ENCODE measurements at regions of chr9 and their contacts with region 1.

Region 1: GRCh38 chr9:114487607-114488300 is 17.5 kb downstream of the WHRN start:
- DNase-seq: peak; percentile 34
- ATAC-seq: peak; percentile 80
- H3K4me3 ChIP-seq: no peak overlapping the region
- H3K27ac ChIP-seq: no peak overlapping the region
- H3K4me1 ChIP-seq: peaks cover 15% of the 10 kb centered on the region
- H3K27me3 ChIP-seq: no peaks in the 10 kb centered on the region
- CTCF ChIP-seq: peak; percentile 90 to 93 (median 93); a peak in 5 of 6 replicates
- EP300 ChIP-seq: no peak
- POLR2A ChIP-seq: no peak
- RAD21 ChIP-seq: peak; percentile 85

Region 2: GRCh38 chr9:114434878-114435311 is 52.9 kb before region 1 on chr9:
- CTCF ChIA-PET with region 1: interaction called, 38 read pairs
- POLR2A ChIA-PET with region 1: no interaction called
- RAD21 ChIA-PET with region 1: interaction called, 6 read pairs
- SMC1A ChIA-PET with region 1: interaction called, 35 read pairs
- in situ Hi-C with region 1: no loop called
- intact Hi-C with region 1: no loop called
- DNase-seq: no peak
- ATAC-seq: peak; percentile 77
- H3K4me3 ChIP-seq: no peak overlapping the region
- H3K27ac ChIP-seq: no peak overlapping the region
- H3K4me1 ChIP-seq: no peaks in the 10 kb centered on the region
- H3K27me3 ChIP-seq: peaks cover 0 to 4% of the 10 kb centered on the region in 2 experiments; a peak in 1 of 4 replicates
- CTCF ChIP-seq: peak; percentile 58 to 75 (median 71)
- EP300 ChIP-seq: no peak
- POLR2A ChIP-seq: no peak
- RAD21 ChIP-seq: peak; percentile 91

Region 3: GRCh38 chr9:114475412-114476135 is 12.2 kb before region 1 on chr9:
- CTCF ChIA-PET with region 1: interaction called, 12 read pairs
- POLR2A ChIA-PET with region 1: no interaction called
- RAD21 ChIA-PET with region 1: no interaction called
- SMC1A ChIA-PET with region 1: interaction called, 5 read pairs
- in situ Hi-C with region 1: no loop called
- intact Hi-C with region 1: no loop called
- DNase-seq: no peak
- ATAC-seq: no peak
- H3K4me3 ChIP-seq: no peak overlapping the region
- H3K27ac ChIP-seq: no peak overlapping the region
- H3K4me1 ChIP-seq: no peaks in the 10 kb centered on the region
- H3K27me3 ChIP-seq: no peaks in the 10 kb centered on the region
- CTCF ChIP-seq: no peak
- EP300 ChIP-seq: no peak
- POLR2A ChIP-seq: no peak
- RAD21 ChIP-seq: no peak

Measured in GM12878 (cell line).